ENCODE measurements at regions of chr7 and their contacts with region 1.

Region 1: DNA sequence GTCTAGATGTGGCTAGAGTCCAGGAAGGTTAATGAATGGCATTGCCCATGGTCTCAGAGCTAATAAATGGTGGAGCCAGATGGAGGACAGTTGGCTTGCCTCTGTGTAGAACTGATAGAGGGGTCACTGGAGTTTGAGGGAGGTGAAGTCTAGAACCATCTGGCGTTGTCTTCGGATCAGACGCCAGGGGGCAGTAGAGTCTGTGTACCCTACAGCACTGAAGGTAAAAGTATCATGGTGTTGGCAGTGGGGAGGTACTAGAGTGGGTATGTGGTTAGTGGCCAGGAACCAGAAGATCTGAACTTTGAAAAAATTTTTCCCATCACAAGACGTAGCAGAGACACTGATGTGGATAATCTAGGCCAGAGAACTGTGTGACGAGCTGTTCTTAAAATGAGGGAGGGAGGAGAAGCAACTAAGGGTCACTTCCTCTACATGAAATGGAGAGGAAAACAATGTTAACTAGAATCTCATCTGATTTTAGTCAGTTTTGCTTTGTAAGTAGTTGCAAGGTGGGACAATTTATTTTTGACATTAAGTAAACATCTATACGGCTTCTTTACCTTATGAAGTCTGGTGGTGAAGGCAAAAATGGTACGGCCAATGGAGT is 227.9 kb upstream of the PRSS58 start:
- DNase-seq: peak; percentile 63
- ATAC-seq: peak; percentile 69
- H3K4me3 Mint-ChIP-seq: no peak overlapping the region
- H3K27ac Mint-ChIP-seq: no peak overlapping the region
- H3K4me1 Mint-ChIP-seq: peaks cover 13% of the 10 kb centered on the region; the same call in 1 of the 2 replicates
- H3K27me3 Mint-ChIP-seq: no peaks in the 10 kb centered on the region
- CTCF ChIP-seq: peak; percentile 70

Region 2: GRCh38 chr7:142516038-142516501 is 30.3 kb after region 1 on chr7:
- CTCF ChIA-PET with region 1: interaction called, 11 read pairs
- POLR2A ChIA-PET with region 1: no interaction called
- DNase-seq: peak; percentile 26
- ATAC-seq: peak; percentile 92
- H3K4me3 Mint-ChIP-seq: no peak overlapping the region
- H3K27ac Mint-ChIP-seq: no peak overlapping the region
- H3K4me1 Mint-ChIP-seq: peaks cover 9% of the 10 kb centered on the region
- H3K27me3 Mint-ChIP-seq: peaks cover 5% of the 10 kb centered on the region; the same call in 1 of the 2 replicates
- CTCF ChIP-seq: peak; percentile 41; the same call in 1 of the 2 replicates